ENCODE measurements at regions of chr11 and their contacts with region 1.

Region 1: DNA sequence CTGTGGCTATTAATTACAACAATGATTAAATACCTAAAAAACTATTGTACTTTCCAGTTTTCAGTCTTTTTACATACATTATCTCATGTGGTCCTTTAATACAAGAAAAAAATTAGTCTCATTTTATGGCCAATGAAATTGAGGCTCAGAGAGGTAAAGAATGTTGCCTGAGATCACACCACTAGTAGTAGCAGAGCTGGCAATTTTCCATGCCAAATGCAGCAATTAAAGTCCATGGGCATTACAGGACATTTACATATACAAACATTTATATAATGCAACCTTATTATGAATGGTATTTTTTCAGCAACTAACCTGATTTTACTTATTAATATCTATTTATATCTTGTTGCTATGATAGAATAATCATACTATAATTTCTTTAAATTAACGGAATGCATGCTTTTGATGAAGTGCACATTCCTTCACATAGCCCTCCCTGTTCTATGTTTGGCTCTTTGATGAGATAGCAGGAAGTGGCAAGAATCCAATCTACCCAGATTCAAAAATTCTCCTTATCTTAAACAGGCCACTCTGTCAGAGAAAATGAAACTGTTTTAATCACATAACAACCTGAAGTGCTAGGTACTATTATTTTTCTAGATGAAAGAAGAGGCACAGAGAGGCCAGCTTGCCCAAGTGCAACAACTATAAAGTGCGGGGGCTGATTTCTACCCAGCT is 120.9 kb upstream of the LDLRAD3 start:
- DNase-seq: no peak
- ATAC-seq: no peak
- H3K4me3 Mint-ChIP-seq: no peak overlapping the region
- H3K27ac Mint-ChIP-seq: no peak overlapping the region
- H3K4me1 Mint-ChIP-seq: peaks cover 9% of the 10 kb centered on the region
- H3K27me3 Mint-ChIP-seq: no peaks in the 10 kb centered on the region

Region 2: GRCh38 chr11:35619116-35619862 is 203.7 kb before region 1 on chr11:
- CTCF ChIA-PET with region 1: interaction called, 25 read pairs
- POLR2A ChIA-PET with region 1: no interaction called
- DNase-seq: no peak
- ATAC-seq: peak; percentile 34
- H3K4me3 Mint-ChIP-seq: peak overlapping the region; percentile 12
- H3K27ac Mint-ChIP-seq: no peak overlapping the region
- H3K4me1 Mint-ChIP-seq: peaks cover 10% of the 10 kb centered on the region
- H3K27me3 Mint-ChIP-seq: peaks cover 57% of the 10 kb centered on the region

Region 3: GRCh38 chr11:35792148-35792845 is 30.7 kb before region 1 on chr11:
- CTCF ChIA-PET with region 1: interaction called, 11 read pairs
- POLR2A ChIA-PET with region 1: interaction called, 3 read pairs
- DNase-seq: no peak
- ATAC-seq: no peak
- H3K4me3 Mint-ChIP-seq: no peak overlapping the region
- H3K27ac Mint-ChIP-seq: no peak overlapping the region
- H3K4me1 Mint-ChIP-seq: no peaks in the 10 kb centered on the region
- H3K27me3 Mint-ChIP-seq: no peaks in the 10 kb centered on the region

Region 4: GRCh38 chr11:35811775-35812174 is 11.2 kb before region 1 on chr11:
- CTCF ChIA-PET with region 1: interaction called, 39 read pairs
- POLR2A ChIA-PET with region 1: no interaction called
- DNase-seq: no peak
- ATAC-seq: no peak
- H3K4me3 Mint-ChIP-seq: no peak overlapping the region
- H3K27ac Mint-ChIP-seq: no peak overlapping the region
- H3K4me1 Mint-ChIP-seq: no peaks in the 10 kb centered on the region
- H3K27me3 Mint-ChIP-seq: no peaks in the 10 kb centered on the region

Region 5: GRCh38 chr11:35852056-35852455 is 29.1 kb after region 1 on chr11:
- CTCF ChIA-PET with region 1: interaction called, 10 read pairs
- POLR2A ChIA-PET with region 1: no interaction called
- DNase-seq: no peak
- ATAC-seq: no peak
- H3K4me3 Mint-ChIP-seq: no peak overlapping the region
- H3K27ac Mint-ChIP-seq: no peak overlapping the region
- H3K4me1 Mint-ChIP-seq: no peaks in the 10 kb centered on the region
- H3K27me3 Mint-ChIP-seq: peaks cover 11% of the 10 kb centered on the region

Region 6: GRCh38 chr11:36265793-36266628 is 443.1 kb after region 1 on chr11:
- CTCF ChIA-PET with region 1: interaction called, 20 read pairs
- POLR2A ChIA-PET with region 1: no interaction called
- DNase-seq: peak; percentile 63
- ATAC-seq: peak; percentile 74
- H3K4me3 Mint-ChIP-seq: no peak overlapping the region
- H3K27ac Mint-ChIP-seq: no peak overlapping the region
- H3K4me1 Mint-ChIP-seq: no peaks in the 10 kb centered on the region
- H3K27me3 Mint-ChIP-seq: no peaks in the 10 kb centered on the region

Measured in activated CD8-positive, alpha-beta T cell treated with anti-CD3 and anti-CD28 coated beads, Interleukin-2, amount 10 ng/mL, durations not matched to agents 7 days and 5 days (primary cell).